ENCODE measurements at regions of chr10 and their contacts with region 1.

Region 1: DNA sequence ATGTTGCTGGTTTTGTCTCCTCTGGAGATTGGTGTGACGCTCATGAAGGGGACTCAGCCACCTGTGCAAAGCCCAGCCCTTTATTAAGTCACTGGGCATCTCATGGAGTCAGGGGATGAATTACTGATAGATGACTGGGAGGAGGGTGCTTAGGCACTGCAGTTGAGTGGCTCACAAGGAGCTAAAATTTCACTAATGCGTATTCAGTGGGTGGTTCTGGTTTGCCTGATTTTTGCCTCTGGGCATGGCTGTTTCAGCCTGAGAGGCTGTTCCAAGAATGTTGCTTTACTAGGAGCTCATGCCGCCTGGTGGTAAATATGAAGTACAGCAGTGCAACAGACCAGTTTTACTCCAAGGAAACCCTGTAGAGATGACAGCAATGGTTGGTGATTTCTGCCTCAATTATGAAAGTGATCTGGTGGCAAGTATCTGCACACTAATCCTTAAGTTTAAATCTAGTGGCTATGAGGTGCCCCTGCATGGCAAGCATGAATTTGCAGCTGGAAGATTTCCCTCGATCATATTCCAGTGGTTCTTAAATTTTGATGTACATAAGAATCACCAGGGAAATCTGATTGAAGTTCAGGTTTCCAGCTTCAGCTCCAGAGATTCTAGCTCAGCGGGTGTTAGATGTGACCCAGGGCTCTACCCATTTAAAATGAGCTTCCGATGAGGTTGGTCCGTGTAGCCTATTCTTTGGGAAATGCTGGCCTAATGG is 19.9 kb downstream of the ACTA2 start:
- DNase-seq: peak; percentile 47 to 76 (median 74)
- H3K4me3 ChIP-seq: no peak overlapping the region
- H3K27ac ChIP-seq: no peak overlapping the region
- H3K4me1 ChIP-seq: peaks cover 0 to 8% (median 3%) of the 10 kb centered on the region in 4 experiments
- H3K27me3 ChIP-seq: no peaks in the 10 kb centered on the region

Region 2: GRCh38 chr10:88478256-88478655 is 454.4 kb before region 1 on chr10:
- CTCF ChIA-PET with region 1: no interaction called
- POLR2A ChIA-PET with region 1: no interaction called
- DNase-seq: no peak
- H3K4me3 ChIP-seq: no peak overlapping the region
- H3K27ac ChIP-seq: no peak overlapping the region
- H3K4me1 ChIP-seq: peaks cover 0 to 3% (median 0%) of the 10 kb centered on the region in 4 experiments
- H3K27me3 ChIP-seq: no peaks in the 10 kb centered on the region

Region 3: GRCh38 chr10:88565072-88565471 is 367.6 kb before region 1 on chr10:
- CTCF ChIA-PET with region 1: interaction called, 47 read pairs
- POLR2A ChIA-PET with region 1: no interaction called
- DNase-seq: peak; percentile 33 to 60 (median 57)
- H3K4me3 ChIP-seq: no peak overlapping the region
- H3K27ac ChIP-seq: no peak overlapping the region
- H3K4me1 ChIP-seq: no peaks in the 10 kb centered on the region
- H3K27me3 ChIP-seq: no peaks in the 10 kb centered on the region

Region 4: GRCh38 chr10:88908194-88908593 is 24.5 kb before region 1 on chr10:
- CTCF ChIA-PET with region 1: interaction called, 26 read pairs
- POLR2A ChIA-PET with region 1: no interaction called
- DNase-seq: no peak
- H3K4me3 ChIP-seq: no peak overlapping the region
- H3K27ac ChIP-seq: no peak overlapping the region
- H3K4me1 ChIP-seq: no peaks in the 10 kb centered on the region
- H3K27me3 ChIP-seq: no peaks in the 10 kb centered on the region

Region 5: DNA sequence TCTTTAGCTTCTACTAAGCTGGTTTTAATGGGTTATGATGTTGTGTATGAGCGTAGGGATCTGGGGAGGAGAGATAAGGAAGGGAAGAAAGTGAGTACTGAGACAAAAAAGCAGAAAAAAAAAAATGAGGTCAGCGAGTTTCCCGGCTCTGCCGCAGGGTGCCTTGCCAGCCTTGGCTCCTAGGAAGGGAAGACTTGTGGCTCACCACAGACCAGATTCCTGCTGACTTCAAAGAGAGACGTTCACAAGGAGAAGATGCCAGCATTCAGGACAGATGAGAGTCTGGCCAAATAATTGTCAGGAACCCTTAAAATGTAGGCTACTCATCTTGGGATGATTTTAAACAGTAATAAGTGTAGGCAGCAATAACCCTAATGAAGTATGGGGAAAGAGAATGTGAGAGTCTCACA is 46.5 kb after region 1 on chr10:
- CTCF ChIA-PET with region 1: interaction called, 31 read pairs
- POLR2A ChIA-PET with region 1: no interaction called
- DNase-seq: peak; percentile 45 to 65 (median 47)
- H3K4me3 ChIP-seq: peak overlapping the region in 1 of 7 experiments; percentile 54
- H3K27ac ChIP-seq: no peak overlapping the region
- H3K4me1 ChIP-seq: peaks cover 6 to 27% (median 19%) of the 10 kb centered on the region in 4 experiments
- H3K27me3 ChIP-seq: no peaks in the 10 kb centered on the region

Region 6: DNA sequence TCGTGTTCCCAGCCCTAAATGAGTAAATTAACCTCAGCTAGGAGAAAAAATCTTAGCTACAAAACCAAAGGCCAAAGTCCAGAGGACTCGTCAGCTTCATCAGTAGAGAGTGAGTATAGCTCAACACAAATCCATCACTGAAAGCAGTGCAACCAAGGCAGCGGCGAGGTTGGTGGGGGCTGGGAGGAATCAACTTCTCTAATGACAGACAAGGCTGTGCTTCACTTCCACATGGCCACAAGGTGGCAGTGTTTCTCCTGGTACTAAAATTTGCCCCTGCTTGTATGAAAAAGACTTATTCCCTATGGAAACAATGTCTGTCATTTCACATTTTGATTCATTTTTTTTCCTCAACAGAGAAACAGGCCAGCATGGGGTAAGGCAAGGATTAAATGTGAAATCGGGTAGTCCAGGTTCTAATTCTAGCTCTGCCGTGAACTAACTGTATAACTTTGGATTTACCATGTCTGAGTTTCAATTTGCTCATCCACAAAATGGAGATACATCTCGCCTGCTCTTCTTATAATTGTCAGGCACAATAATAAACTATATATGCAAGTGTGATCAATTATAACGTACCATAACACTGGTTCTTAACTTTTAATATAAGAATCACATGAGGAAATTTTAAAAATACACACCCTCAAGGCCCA is 97.2 kb after region 1 on chr10:
- CTCF ChIA-PET with region 1: interaction called, 18 read pairs
- POLR2A ChIA-PET with region 1: no interaction called
- DNase-seq: peak; percentile 74 to 81 (median 76)
- H3K4me3 ChIP-seq: peak overlapping the region in 1 of 7 experiments; percentile 42
- H3K27ac ChIP-seq: no peak overlapping the region
- H3K4me1 ChIP-seq: peaks cover 9 to 30% (median 19%) of the 10 kb centered on the region in 4 experiments
- H3K27me3 ChIP-seq: no peaks in the 10 kb centered on the region

Region 7: DNA sequence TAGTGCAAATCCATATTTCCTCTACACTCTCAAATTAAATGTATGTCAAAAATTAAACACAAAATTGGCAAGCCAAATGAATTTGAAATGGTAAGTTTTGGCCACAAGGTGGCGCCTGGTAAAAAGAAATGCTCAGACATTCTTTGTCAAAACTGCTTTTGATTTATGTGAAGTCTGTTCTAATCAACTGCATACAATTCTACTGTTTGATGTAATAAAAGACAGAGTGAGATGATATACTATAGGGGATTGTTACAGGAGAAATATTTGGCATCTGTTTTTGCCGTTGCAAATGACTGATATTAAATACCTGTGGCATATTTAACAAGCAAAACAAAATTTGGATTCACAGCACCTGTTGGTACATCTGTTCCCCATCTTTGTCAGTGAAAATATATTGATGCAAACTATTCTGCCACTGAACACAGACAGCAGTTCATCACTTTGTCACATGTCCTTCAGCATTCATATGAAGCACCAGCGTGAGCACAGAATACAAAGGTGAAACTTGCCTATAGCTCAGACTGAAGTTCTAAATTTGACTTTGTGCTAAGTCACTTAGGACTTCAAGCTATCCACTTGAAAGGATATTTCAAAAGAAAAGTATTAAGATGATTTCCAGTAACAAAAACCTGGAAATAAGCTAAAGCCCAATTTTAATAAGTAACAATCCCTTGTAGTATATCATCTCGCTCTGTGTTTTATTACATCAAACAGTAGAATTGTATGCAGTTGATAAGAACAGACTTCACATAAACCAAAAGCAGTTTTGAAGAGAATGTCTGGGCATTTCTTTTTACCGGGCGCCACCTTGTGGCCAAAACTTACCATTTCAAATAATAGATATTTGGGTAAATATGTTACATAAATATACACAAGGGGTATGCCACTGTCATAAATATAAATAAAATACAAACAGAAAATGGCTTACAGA is 284.6 kb after region 1 on chr10:
- CTCF ChIA-PET with region 1: interaction called, 56 read pairs
- POLR2A ChIA-PET with region 1: no interaction called
- DNase-seq: peak; percentile 67 to 82 (median 76)
- H3K4me3 ChIP-seq: no peak overlapping the region
- H3K27ac ChIP-seq: peak overlapping the region in 1 of 2 experiments; percentile 8
- H3K4me1 ChIP-seq: peaks cover 2 to 11% (median 5%) of the 10 kb centered on the region in 4 experiments
- H3K27me3 ChIP-seq: no peaks in the 10 kb centered on the region

Measured in common myeloid progenitor, CD34-positive (primary cell).